B cell (primary cell): ENCODE measurements at regions of chr9 and their contacts with region 1.

Region 1: DNA sequence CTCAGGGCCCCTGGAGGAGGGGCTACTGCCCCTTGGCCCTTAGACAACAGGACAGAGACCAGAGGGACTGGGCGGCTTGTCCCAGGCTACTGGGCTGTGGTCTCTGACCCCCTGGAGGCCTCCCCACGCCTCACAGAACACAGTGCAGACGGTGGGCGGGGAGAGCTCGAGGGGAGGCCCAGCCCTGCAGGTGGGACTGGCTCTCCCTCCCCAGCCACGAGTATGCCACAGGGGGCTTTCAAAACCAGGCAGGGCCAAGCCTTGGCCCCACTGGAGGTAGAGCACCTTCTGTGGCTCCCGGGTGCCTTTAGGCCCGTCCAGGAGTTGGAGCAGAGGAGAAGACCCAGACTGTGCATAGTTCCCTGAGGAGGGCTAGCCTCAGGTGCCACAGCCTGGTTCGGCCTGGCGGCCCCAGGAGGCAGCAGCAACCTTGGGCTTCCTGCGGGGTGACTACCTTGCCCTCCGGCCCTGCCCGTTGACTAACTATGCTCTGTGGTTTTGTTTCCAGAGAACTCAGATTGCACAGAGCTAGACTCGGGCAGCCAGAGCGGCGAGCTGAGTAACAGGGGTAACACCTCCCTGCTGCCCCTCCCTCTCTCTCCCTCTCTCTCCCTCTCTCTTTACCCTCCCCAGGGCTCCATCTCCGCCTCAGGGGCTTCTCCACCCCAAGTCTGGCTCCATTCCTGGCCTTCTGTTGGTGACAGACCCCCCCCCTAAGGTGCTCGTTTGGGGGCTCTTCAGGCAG is 15.5 kb downstream of the CARD19 start:
- DNase-seq: no peak
- ATAC-seq: no peak
- H3K4me3 ChIP-seq: no peak overlapping the region
- H3K4me3 Mint-ChIP-seq: no peak overlapping the region
- H3K27ac ChIP-seq: no peak overlapping the region
- H3K27ac Mint-ChIP-seq: no peak overlapping the region
- H3K4me1 ChIP-seq: peaks cover 21 to 29% of the 10 kb centered on the region in 2 donors
- H3K4me1 Mint-ChIP-seq: peaks cover 30% of the 10 kb centered on the region
- H3K27me3 ChIP-seq: no peaks in the 10 kb centered on the region
- H3K27me3 Mint-ChIP-seq: no peaks in the 10 kb centered on the region
- CTCF ChIP-seq: no peak

Region 2: DNA sequence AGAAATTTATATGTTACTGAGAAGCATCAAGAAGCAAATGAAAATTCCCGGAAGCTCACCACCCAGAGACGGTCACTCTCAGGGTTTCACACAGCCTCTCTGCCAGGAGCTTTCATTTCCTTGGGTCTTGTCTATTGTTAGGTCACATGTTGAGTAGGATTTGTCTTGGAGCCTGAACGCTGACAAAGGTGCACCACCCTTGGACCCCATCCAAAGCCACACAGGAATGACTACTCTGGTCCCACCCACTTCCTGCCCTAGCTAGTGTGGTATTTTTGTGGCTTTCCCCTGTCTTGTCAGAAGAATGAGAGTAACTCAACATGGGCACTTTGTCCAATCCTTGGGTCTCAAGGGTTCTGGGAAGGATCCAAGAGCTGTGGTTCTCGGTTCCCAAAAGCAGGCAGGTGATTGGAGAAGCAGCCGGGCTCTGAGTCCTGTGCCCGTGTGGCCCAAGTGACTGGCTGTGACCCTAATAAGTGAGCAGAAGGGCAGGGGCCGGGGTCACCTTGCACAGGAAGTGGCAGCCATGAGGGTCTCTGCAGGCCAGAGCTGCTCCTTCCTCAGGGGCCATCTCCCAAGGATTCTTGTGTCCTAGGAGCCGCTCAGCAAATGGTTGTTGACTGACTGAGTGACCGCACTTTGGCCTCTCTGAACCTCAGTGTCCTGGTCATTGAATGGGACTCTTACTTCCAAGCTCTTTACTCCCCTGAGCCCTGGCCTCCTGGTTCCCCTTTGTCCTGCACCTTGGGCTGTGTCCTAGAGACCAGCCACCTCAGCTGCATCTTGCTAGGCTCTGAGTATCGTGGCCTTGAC is 157.3 kb before region 1 on chr9:
- CTCF ChIA-PET with region 1: interaction called, 31 read pairs
- POLR2A ChIA-PET with region 1: no interaction called
- intact Hi-C with region 1: no loop called
- DNase-seq: peak; percentile 37
- ATAC-seq: peak; percentile 53
- H3K4me3 ChIP-seq: peak overlapping the region in 4 of 5 experiments; percentile 7 to 45 (median 34)
- H3K4me3 Mint-ChIP-seq: peak overlapping the region; percentile 61
- H3K27ac ChIP-seq: peak overlapping the region in 1 of 2 donors; percentile 23
- H3K27ac Mint-ChIP-seq: peak overlapping the region; percentile 26
- H3K4me1 ChIP-seq: peaks cover 16 to 17% of the 10 kb centered on the region in 2 donors
- H3K4me1 Mint-ChIP-seq: peaks cover 24% of the 10 kb centered on the region
- H3K27me3 ChIP-seq: peaks cover 0 to 7% (median 0%) of the 10 kb centered on the region in 4 experiments
- H3K27me3 Mint-ChIP-seq: peaks cover 6% of the 10 kb centered on the region
- CTCF ChIP-seq: no peak

Region 3: GRCh38 chr9:93003552-93004407 is 107.8 kb before region 1 on chr9:
- CTCF ChIA-PET with region 1: interaction called, 50 read pairs
- POLR2A ChIA-PET with region 1: no interaction called
- intact Hi-C with region 1: loop called (anchors 1 kb)
- DNase-seq: peak; percentile 72
- ATAC-seq: peak; percentile 72
- H3K4me3 ChIP-seq: no peak overlapping the region
- H3K4me3 Mint-ChIP-seq: no peak overlapping the region
- H3K27ac ChIP-seq: no peak overlapping the region
- H3K27ac Mint-ChIP-seq: peak overlapping the region; percentile 6
- H3K4me1 ChIP-seq: peaks cover 0 to 3% of the 10 kb centered on the region in 2 donors
- H3K4me1 Mint-ChIP-seq: peaks cover 25% of the 10 kb centered on the region
- H3K27me3 ChIP-seq: no peaks in the 10 kb centered on the region
- H3K27me3 Mint-ChIP-seq: no peaks in the 10 kb centered on the region
- CTCF ChIP-seq: peak; percentile 75

Region 4: DNA sequence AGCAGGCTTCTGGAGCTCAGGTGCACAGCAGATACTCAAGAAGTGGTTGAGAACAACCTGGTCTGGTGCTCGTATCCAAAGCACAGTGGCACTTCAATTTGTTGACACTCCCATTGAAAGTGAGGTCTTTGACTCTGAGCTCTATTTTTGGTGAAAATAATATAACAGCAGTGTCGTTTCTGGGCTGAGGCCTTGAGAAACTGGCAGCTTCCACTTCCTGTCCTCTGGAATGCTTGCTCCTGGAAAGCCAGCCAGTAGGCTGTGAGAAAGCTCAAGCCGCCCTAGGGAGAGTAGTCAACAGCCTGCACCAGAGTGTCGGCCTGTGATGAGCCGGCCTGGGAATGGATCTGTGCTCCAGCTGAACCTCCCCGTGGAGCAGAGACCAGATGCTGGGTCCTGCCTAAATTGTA is 59.9 kb before region 1 on chr9:
- CTCF ChIA-PET with region 1: interaction called, 11 read pairs
- POLR2A ChIA-PET with region 1: interaction called, 6 read pairs
- intact Hi-C with region 1: no loop called
- DNase-seq: no peak
- ATAC-seq: no peak
- H3K4me3 ChIP-seq: no peak overlapping the region
- H3K4me3 Mint-ChIP-seq: no peak overlapping the region
- H3K27ac ChIP-seq: no peak overlapping the region
- H3K27ac Mint-ChIP-seq: peak overlapping the region; percentile 20
- H3K4me1 ChIP-seq: peaks cover 0 to 4% of the 10 kb centered on the region in 2 donors
- H3K4me1 Mint-ChIP-seq: peaks cover 11% of the 10 kb centered on the region
- H3K27me3 ChIP-seq: no peaks in the 10 kb centered on the region
- H3K27me3 Mint-ChIP-seq: no peaks in the 10 kb centered on the region
- CTCF ChIP-seq: no peak

Region 5: DNA sequence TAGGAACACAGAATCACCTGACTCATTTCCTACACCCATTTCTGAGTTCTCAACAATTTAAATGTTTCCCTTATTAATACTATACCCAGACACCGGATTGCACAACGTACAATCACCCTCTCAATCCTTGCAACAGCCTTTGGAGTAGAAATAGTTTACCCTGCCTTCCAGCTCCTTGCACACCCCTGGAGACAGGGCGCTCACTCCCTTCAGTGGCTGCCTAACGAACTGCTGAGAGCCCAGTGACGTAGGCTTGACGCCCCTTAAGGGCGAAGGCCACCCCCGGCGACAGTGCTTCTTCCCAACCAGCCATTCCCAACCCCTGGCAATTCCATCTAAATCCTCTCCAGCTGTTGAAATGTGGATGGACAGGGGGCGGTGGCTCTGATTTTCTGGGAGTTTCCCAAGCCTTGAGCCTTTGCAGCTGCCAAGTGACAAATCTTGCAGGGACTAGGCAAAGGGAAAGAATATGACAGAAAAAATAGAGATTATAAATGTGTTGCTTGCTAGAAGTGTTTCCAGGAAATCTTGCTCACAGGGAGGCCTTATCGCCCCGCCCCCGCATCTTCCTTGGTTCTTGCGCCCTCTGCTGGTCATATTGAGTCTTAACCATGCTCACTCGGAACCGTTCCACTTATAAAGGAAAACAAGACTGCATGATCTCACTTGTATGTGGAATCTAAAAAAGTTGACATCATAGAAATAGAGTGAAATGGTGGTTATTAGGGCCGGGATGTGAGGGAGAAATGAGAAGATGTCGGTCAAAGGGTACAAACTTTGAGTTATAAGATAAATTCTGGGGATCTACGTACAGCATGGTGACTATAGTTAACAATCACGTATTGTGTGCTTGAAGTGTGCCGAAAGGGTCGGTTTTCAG is 851.3 kb after region 1 on chr9:
- CTCF ChIA-PET with region 1: interaction called, 3 read pairs
- POLR2A ChIA-PET with region 1: no interaction called
- intact Hi-C with region 1: loop called (anchors 2 kb)
- DNase-seq: peak; percentile 85
- ATAC-seq: peak; percentile 56
- H3K4me3 ChIP-seq: no peak overlapping the region
- H3K4me3 Mint-ChIP-seq: no peak overlapping the region
- H3K27ac ChIP-seq: no peak overlapping the region
- H3K27ac Mint-ChIP-seq: no peak overlapping the region
- H3K4me1 ChIP-seq: peaks cover 40% of the 10 kb centered on the region in 2 donors
- H3K4me1 Mint-ChIP-seq: peaks cover 32% of the 10 kb centered on the region
- H3K27me3 ChIP-seq: peaks cover 0 to 72% (median 42%) of the 10 kb centered on the region in 4 experiments
- H3K27me3 Mint-ChIP-seq: peaks cover 54% of the 10 kb centered on the region
- CTCF ChIP-seq: peak; percentile 79